T-cell (primary cell): ENCODE measurements at regions of chr6 and their contacts with region 1.

Region 1: GRCh38 chr6:30541515-30542403 is 14.5 kb downstream of the GNL1 start:
- DNase-seq: peak; percentile 54 to 94 (median 74)
- ATAC-seq: peak; percentile 68 to 80 (median 76)
- H3K4me3 ChIP-seq: peak overlapping the region; percentile 46 to 74
- H3K4me3 Mint-ChIP-seq: peak overlapping the region; percentile 78 to 81 (median 81)
- H3K27ac ChIP-seq: peak overlapping the region; percentile 74
- H3K27ac Mint-ChIP-seq: peak overlapping the region; percentile 91 to 95
- H3K4me1 ChIP-seq: peaks cover 26 to 31% of the 10 kb centered on the region in 2 experiments
- H3K4me1 Mint-ChIP-seq: peaks cover 34 to 37% (median 35%) of the 10 kb centered on the region in 3 donors
- H3K27me3 ChIP-seq: no peaks in the 10 kb centered on the region
- H3K27me3 Mint-ChIP-seq: no peaks in the 10 kb centered on the region

Region 2: DNA sequence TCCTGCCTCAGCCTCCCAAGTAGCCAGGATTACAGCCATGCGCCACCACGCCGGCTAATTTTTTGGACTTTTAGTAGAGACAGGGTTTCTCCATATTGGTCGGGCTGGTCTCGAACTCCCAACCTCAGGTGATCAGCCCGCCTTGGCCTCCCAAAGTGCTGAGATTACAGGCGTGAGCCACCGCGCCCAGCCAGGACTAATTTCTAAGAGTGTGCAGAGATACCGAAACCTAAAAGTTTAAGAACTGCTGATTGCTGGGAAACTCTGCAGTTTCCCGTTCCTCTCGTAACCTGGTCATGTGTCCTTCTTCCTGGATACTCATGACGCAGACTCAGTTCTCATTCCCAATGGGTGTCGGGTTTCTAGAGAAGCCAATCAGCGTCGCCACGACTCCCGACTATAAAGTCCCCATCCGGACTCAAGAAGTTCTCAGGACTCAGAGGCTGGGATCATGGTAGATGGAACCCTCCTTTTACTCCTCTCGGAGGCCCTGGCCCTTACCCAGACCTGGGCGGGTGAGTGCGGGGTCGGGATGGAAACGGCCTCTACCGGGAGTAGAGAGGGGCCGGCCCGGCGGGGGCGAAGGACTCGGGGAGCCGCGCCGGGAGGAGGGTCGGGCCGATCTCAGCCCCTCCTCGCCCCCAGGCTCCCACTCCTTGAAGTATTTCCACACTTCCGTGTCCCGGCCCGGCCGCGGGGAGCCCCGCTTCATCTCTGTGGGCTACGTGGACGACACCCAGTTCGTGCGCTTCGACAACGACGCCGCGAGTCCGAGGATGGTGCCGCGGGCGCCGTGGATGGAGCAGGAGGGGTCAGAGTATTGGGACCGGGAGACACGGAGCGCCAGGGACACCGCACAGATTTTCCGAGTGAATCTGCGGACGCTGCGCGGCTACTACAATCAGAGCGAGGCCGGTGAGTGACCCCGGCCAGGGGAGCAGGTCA is 52.4 kb before region 1 on chr6 and contains the start of gene HLA-E:
- CTCF ChIA-PET with region 1: interaction called, 3 to 73 read pairs
- POLR2A ChIA-PET with region 1: interaction called, 5 to 6 read pairs
- DNase-seq: peak; percentile 69 to 99 (median 90)
- ATAC-seq: peak; percentile 78 to 84 (median 84)
- H3K4me3 ChIP-seq: peak within 1 kb of the TSS; percentile 82 to 93
- H3K4me3 Mint-ChIP-seq: peak within 1 kb of the TSS; percentile 98 to 99 (median 99)
- H3K27ac ChIP-seq: peak within 1 kb of the TSS; percentile 89
- H3K27ac Mint-ChIP-seq: peak within 1 kb of the TSS; percentile 98 to 99
- H3K4me1 ChIP-seq: peaks cover 34 to 54% of the 10 kb centered on the region in 2 experiments
- H3K4me1 Mint-ChIP-seq: peaks cover 40 to 59% (median 56%) of the 10 kb centered on the region in 3 donors
- H3K27me3 ChIP-seq: peaks cover 0 to 3% of the 10 kb centered on the region in 2 experiments
- H3K27me3 Mint-ChIP-seq: no peaks in the 10 kb centered on the region
- total RNA-seq, gene HLA-E: 1,114 to 1,417 (median 1,253) TPM

Region 3: DNA sequence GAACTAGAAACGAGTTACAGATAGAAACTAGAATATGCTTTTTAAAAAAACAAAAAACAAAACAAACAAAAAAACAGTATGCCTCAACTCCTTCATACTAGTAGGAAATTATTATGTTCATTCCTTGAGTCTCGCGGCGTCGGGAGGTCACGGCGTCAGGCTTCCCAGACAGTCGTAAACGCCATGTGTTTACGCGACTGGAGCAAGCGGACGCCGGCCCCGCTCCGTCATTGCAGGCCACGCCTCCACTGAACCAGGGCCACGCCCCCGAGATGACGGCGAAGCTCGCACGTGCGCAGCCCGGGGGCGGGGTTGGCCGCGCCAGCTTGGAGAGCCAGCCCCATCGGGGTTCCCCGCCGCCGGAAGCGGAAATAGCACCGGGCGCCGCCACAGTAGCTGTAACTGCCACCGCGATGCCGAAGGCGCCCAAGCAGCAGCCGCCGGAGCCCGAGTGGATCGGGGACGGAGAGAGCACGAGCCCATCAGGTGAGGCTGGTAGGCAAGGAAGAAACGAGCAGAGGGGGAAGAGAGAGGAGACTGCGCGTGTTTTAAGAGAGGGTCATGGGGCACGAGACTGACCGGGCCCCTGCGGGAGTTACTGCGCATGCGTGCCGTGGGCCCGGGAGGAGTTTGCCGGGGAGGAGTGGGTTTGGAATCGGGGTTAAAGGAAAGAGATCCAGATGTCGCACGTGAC is 29.5 kb after region 1 on chr6 and contains the start of gene ABCF1:
- CTCF ChIA-PET with region 1: interaction called, 6 to 15 read pairs
- POLR2A ChIA-PET with region 1: interaction called, 3 to 9 read pairs
- DNase-seq: peak; percentile 97 to 100 (median 99)
- ATAC-seq: peak; percentile 94 to 98 (median 96)
- H3K4me3 ChIP-seq: peak within 1 kb of the TSS; percentile 71 to 92
- H3K4me3 Mint-ChIP-seq: peak within 1 kb of the TSS; percentile 97 to 100 (median 98)
- H3K27ac ChIP-seq: peak within 1 kb of the TSS; percentile 87
- H3K27ac Mint-ChIP-seq: peak within 1 kb of the TSS; percentile 98 to 99
- H3K4me1 ChIP-seq: peaks cover 27 to 43% of the 10 kb centered on the region in 2 experiments
- H3K4me1 Mint-ChIP-seq: peaks cover 62 to 69% (median 66%) of the 10 kb centered on the region in 3 donors
- H3K27me3 ChIP-seq: no peaks in the 10 kb centered on the region
- H3K27me3 Mint-ChIP-seq: no peaks in the 10 kb centered on the region
- total RNA-seq, gene ABCF1: 61.1 to 89.9 (median 73.8) TPM

Region 4: DNA sequence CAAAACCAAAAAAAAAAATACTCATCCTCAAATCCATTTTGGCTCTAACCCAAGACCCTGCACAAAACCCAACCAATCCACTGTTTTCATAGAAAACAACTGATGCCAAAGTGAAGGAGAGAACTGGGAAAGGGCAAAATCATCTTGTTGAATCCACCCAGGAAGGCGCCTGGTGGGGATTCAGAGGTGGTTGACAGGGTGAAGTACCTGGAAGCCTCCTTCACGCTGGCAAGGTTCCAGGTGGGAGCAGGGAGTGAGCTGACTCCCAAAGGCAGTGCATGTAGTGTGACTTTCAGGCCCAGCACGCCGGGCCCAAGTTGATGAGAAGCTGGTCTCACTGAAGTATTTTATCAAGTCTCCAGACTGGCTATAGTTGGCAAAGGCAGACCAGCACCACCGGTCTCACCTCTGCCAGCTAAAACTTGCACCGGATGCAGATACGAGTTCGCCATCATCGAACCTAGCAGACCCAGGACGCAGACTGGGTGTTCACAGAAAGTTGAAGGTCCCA is 58.7 kb after region 1 on chr6:
- CTCF ChIA-PET with region 1: interaction called, 7 to 22 read pairs
- POLR2A ChIA-PET with region 1: interaction called, 5 to 6 read pairs
- DNase-seq: no peak
- ATAC-seq: no peak
- H3K4me3 ChIP-seq: no peak overlapping the region
- H3K4me3 Mint-ChIP-seq: no peak overlapping the region
- H3K27ac ChIP-seq: no peak overlapping the region
- H3K27ac Mint-ChIP-seq: peak overlapping the region in 1 of 2 donors; percentile 52
- H3K4me1 ChIP-seq: peaks cover 6 to 26% of the 10 kb centered on the region in 2 experiments
- H3K4me1 Mint-ChIP-seq: peaks cover 21 to 39% (median 22%) of the 10 kb centered on the region in 3 donors
- H3K27me3 ChIP-seq: no peaks in the 10 kb centered on the region
- H3K27me3 Mint-ChIP-seq: no peaks in the 10 kb centered on the region

Region 5: DNA sequence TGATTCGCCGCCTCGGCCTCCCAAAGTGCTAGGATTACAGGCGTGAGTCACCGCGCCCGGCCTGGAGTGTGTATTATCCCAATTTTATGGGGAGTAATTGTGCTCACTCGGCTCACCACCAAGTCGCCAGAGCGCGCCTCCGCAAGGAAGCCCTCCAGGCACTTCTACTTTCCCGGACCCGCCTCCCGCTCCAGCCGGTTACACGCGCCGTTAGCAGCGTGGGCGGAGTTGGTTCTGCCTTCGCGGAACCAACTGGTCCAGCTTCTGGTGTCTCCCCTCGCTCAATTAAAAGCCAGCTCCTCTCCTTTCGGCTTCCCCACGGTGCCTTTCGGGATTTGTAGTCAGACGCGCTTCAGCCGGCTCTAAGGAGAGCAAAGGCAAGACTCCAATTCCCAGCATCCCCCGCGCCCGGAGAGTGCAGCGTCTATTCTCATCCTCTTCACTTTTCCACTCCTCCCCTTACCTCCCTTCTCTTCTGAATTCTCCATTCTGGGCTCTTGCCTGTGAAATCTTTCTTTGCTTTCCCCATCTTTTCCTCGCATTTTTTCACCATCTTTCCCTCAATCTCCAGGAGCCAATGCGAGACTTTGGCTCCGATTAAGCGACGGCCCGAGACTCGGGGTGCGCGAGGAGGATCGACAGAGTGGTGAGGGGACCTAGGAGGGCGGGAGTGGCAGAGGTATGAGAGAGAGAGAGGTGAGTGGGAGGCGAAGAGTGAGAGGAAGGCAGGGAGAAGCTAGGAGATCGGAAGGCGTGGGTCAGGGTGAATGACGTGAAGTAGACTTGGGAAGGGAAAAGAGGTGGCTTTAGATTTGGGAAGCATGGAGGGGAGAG is 366.2 kb after region 1 on chr6 and contains the start of gene GTF2H4:
- CTCF ChIA-PET with region 1: no interaction called
- POLR2A ChIA-PET with region 1: no interaction called
- DNase-seq: peak; percentile 84 to 97 (median 93)
- ATAC-seq: peak; percentile 98 to 100 (median 98)
- H3K4me3 ChIP-seq: peak within 1 kb of the TSS; percentile 88 to 91
- H3K4me3 Mint-ChIP-seq: peak within 1 kb of the TSS; percentile 99 to 100 (median 99)
- H3K27ac ChIP-seq: no peak within 1 kb of the TSS
- H3K27ac Mint-ChIP-seq: peak within 1 kb of the TSS; percentile 80 to 87
- H3K4me1 ChIP-seq: peaks cover 6 to 20% of the 10 kb centered on the region in 2 experiments
- H3K4me1 Mint-ChIP-seq: peaks cover 17 to 26% (median 24%) of the 10 kb centered on the region in 3 donors
- H3K27me3 ChIP-seq: no peaks in the 10 kb centered on the region
- H3K27me3 Mint-ChIP-seq: no peaks in the 10 kb centered on the region
- total RNA-seq, gene GTF2H4: 15.5 to 39.2 (median 33.3) TPM